A549 (cell line): ENCODE measurements at regions of chr1 and their contacts with region 1.

Region 1: DNA sequence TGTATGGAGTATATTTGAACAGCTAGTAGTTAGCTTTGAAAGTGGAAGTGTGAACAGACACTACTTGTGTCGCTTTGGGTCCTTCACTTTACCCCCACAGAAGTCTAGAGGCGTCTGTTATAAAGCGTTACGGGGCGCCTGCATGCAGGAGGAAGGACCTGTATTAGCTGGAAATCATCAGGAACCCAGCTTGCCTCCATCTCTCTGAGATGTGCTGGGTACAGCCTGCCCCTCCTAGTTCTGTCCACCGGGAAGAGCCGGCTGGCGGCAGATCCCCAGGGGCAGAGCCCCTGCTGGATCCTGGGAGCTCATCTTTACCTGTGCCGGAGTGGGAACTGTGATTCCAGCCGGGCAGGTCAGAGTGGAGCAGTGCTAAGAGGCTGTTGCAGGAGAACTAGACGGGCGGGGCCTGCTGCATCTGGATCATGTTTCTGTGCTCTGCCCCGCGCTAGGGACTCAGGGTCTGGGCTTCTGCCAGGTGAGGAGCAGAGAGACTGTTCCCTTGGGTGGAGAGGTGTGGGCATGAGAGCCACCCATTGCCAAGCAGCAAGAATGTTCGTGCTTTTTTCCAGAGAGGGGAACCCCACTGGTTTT is 22.3 kb upstream of the SPSB1 start:
- DNase-seq: no peak
- ATAC-seq: no peak
- H3K4me3 ChIP-seq: no peak overlapping the region
- H3K27ac ChIP-seq: peak overlapping the region in 1 of 2 experiments; percentile 35; a peak in 1 of 6 replicates
- H3K4me1 ChIP-seq: peaks cover 6% of the 10 kb centered on the region; the same call in 2 of the 3 replicates
- CTCF ChIP-seq: no peak
- EP300 ChIP-seq: no peak
- POLR2A ChIP-seq: no peak
- RAD21 ChIP-seq: no peak

Region 2: GRCh38 chr1:9211291-9211811 is 59.0 kb before region 1 on chr1:
- CTCF ChIA-PET with region 1: no interaction called
- POLR2A ChIA-PET with region 1: no interaction called
- DNase-seq: no peak
- ATAC-seq: no peak
- H3K4me3 ChIP-seq: no peak overlapping the region
- H3K27ac ChIP-seq: no peak overlapping the region
- H3K4me1 ChIP-seq: no peaks in the 10 kb centered on the region
- CTCF ChIP-seq: no peak
- EP300 ChIP-seq: no peak
- POLR2A ChIP-seq: no peak
- RAD21 ChIP-seq: no peak

Region 3: GRCh38 chr1:9292361-9293240 is 22.2 kb after region 1 on chr1 and contains the start of gene SPSB1:
- CTCF ChIA-PET with region 1: interaction called, 21 read pairs
- POLR2A ChIA-PET with region 1: no interaction called
- DNase-seq: peak in 1 of 2 experiments; percentile 64
- ATAC-seq: peak; percentile 47 to 54
- H3K4me3 ChIP-seq: peak within 1 kb of the TSS; percentile 96
- H3K27ac ChIP-seq: peak within 1 kb of the TSS; percentile 93 to 99
- H3K4me1 ChIP-seq: peaks cover 57% of the 10 kb centered on the region
- CTCF ChIP-seq: no peak
- EP300 ChIP-seq: no peak
- POLR2A ChIP-seq: peak; percentile 67
- RAD21 ChIP-seq: no peak; a peak in 1 of 5 replicates
- polyA plus RNA-seq, gene SPSB1: 19.4 and 23.7 TPM in 2 replicates

Region 4: DNA sequence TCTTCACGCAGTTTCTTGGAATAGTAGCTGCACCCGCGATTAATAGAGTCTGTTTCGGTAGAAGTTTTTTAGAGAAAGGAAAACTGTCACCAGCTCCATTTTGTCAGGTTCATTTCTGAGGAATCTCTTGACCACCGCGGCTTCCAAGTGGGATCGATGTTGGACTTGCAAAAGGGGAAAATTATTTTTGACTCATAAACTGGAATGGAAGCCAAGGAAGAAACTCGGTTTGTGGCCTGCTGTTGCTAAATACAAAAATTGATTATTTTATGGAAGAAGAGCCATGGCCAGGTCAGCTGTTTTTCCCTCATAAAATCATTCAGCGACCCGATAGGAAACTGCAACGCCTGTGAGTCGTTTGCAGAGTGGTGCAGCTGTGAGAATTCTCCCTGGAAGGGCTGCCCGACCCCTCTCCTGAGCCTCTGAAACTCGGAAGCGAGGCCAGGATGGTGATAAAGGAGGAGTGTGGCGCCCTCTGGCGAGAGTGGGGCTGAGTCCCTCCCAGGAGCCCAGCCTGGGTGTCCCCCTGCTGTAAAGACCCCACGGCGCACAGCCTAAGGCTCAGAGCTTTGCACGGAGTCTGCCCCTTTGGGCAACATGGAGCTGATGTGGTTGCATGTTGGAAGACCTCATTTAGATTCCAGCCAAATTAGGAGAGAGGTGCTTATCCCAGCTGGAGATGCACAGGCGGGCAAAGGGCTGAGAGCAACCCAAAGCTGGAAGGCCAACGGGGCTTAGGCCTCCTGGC is 185.3 kb after region 1 on chr1:
- CTCF ChIA-PET with region 1: interaction called, 12 read pairs
- POLR2A ChIA-PET with region 1: no interaction called
- DNase-seq: peak; percentile 35 to 44
- ATAC-seq: peak; percentile 76 to 94; a peak in 5 of 6 replicates
- H3K4me3 ChIP-seq: no peak overlapping the region
- H3K27ac ChIP-seq: peak overlapping the region; percentile 22 to 31; a peak in 1 of 6 replicates
- H3K4me1 ChIP-seq: no peaks in the 10 kb centered on the region
- CTCF ChIP-seq: peak; percentile 59
- EP300 ChIP-seq: no peak
- POLR2A ChIP-seq: no peak
- RAD21 ChIP-seq: peak; percentile 82 to 83

Region 5: GRCh38 chr1:9486466-9487140 is 216.2 kb after region 1 on chr1:
- CTCF ChIA-PET with region 1: interaction called, 127 read pairs
- POLR2A ChIA-PET with region 1: no interaction called
- DNase-seq: no peak
- ATAC-seq: no peak
- H3K4me3 ChIP-seq: no peak overlapping the region
- H3K27ac ChIP-seq: no peak overlapping the region; a peak in 1 of 6 replicates
- H3K4me1 ChIP-seq: 0 out of 3 replicates have a peak, but pooled peaks cover 3% of the 10 kb centered on the region
- CTCF ChIP-seq: no peak
- EP300 ChIP-seq: no peak
- POLR2A ChIP-seq: no peak
- RAD21 ChIP-seq: no peak